ENCODE measurements at regions of chr11 and their contacts with region 1.

Region 1: GRCh38 chr11:102287964-102288724 is 29.1 kb upstream of the BIRC3 start:
- DNase-seq: peak; percentile 43
- ATAC-seq: peak; percentile 91
- H3K4me3 Mint-ChIP-seq: peak overlapping the region; percentile 53
- H3K27ac Mint-ChIP-seq: peak overlapping the region; percentile 25
- H3K4me1 Mint-ChIP-seq: peaks cover 19% of the 10 kb centered on the region
- H3K27me3 Mint-ChIP-seq: no peaks in the 10 kb centered on the region
- CTCF ChIP-seq: peak; percentile 72

Region 2: GRCh38 chr11:102036757-102037156 is 251.4 kb before region 1 on chr11:
- CTCF ChIA-PET with region 1: no interaction called
- POLR2A ChIA-PET with region 1: no interaction called
- intact Hi-C with region 1: no loop called
- DNase-seq: no peak
- ATAC-seq: no peak
- H3K4me3 Mint-ChIP-seq: no peak overlapping the region
- H3K27ac Mint-ChIP-seq: no peak overlapping the region
- H3K4me1 Mint-ChIP-seq: no peaks in the 10 kb centered on the region
- H3K27me3 Mint-ChIP-seq: peaks cover 8% of the 10 kb centered on the region
- CTCF ChIP-seq: no peak

Region 3: DNA sequence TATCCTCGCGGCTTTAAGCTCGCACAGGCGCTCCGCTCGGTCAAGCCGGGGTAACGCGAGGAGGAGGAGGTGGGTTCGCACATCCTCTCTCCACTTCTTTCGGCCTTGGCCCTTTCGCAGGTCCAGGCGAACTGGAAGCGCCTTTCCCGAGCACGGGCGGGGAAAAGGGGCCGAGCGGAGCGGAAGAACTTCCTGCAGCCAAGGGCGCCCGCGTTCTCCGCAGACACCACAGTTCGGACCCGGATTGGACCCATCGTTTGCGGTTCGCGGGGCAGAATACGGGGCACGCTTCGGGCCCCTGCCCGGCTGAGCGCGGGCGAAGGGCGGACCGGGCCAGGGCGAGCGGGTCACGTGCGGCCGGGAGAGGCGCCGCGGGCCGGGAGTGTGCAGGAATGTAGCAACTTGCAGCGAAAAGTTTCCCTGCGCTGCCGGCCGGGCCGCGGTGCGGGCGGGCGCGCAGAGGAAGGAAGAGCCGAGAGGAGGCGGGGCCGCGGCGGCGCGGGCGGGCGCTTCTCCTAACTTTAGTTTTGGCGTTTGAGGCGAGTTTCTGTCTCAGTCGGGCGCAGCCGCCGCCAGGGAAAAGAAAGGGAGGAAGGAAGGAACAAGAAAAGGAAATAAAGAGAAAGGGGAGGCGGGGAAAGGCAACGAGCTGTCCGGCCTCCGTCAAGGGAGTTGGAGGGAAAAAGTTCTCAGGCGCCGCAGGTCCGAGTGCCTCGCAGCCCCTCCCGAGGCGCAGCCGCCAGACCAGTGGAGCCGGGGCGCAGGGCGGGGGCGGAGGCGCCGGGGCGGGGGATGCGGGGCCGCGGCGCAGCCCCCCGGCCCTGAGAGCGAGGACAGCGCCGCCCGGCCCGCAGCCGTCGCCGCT is 178.0 kb before region 1 on chr11 and contains the start of gene YAP1:
- CTCF ChIA-PET with region 1: no interaction called
- POLR2A ChIA-PET with region 1: no interaction called
- intact Hi-C with region 1: no loop called
- DNase-seq: peak; percentile 65
- ATAC-seq: peak; percentile 74
- H3K4me3 Mint-ChIP-seq: peak within 1 kb of the TSS; percentile 84
- H3K27ac Mint-ChIP-seq: no peak within 1 kb of the TSS
- H3K4me1 Mint-ChIP-seq: peaks cover 11% of the 10 kb centered on the region
- H3K27me3 Mint-ChIP-seq: peaks cover 48% of the 10 kb centered on the region
- CTCF ChIP-seq: no peak
- total RNA-seq, gene YAP1: not detected

Region 4: DNA sequence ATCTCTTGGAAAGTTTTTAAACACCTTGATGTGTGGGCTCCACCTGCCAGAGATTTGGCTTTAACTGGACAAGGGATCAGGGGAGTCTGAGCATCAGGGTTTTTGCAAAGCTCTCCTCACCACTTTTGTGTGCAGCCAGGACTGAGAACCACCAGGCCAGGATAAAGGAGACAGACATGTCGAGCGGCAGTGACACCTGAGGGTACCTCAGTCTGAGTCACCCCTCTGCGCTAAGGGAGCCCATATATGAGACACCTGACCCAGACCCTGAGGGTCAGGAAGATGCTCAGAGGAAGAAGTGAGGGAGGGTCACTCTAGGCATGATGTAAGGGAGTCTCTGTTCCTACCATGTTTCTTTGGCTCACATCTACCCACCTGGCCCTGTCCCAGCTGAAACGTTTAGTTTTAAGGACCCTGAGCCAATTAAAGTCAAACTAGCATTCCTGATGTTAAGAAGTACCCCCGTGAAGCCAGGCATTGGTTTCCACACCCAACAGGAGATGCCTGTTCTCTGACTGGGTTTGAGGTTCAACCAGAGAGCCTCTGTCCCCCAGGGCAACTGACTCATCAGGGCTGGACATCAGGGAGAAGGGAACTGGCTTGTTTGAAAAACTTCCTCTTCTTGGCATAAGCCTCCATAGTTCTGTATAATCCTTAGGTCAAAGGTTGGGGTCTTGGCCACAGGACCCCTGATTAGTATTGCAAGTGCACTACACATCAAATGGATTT is 43.3 kb before region 1 on chr11:
- CTCF ChIA-PET with region 1: no interaction called
- POLR2A ChIA-PET with region 1: no interaction called
- intact Hi-C with region 1: no loop called
- DNase-seq: no peak
- ATAC-seq: no peak
- H3K4me3 Mint-ChIP-seq: no peak overlapping the region
- H3K27ac Mint-ChIP-seq: no peak overlapping the region
- H3K4me1 Mint-ChIP-seq: no peaks in the 10 kb centered on the region
- H3K27me3 Mint-ChIP-seq: no peaks in the 10 kb centered on the region
- CTCF ChIP-seq: no peak

Region 5: GRCh38 chr11:102306048-102306585 is 18.0 kb after region 1 on chr11:
- CTCF ChIA-PET with region 1: interaction called, 403 read pairs
- POLR2A ChIA-PET with region 1: interaction called, 5 read pairs
- intact Hi-C with region 1: no loop called
- DNase-seq: peak; percentile 38
- ATAC-seq: peak; percentile 40
- H3K4me3 Mint-ChIP-seq: peak overlapping the region; percentile 51
- H3K27ac Mint-ChIP-seq: peak overlapping the region; percentile 81
- H3K4me1 Mint-ChIP-seq: peaks cover 55% of the 10 kb centered on the region
- H3K27me3 Mint-ChIP-seq: no peaks in the 10 kb centered on the region
- CTCF ChIP-seq: peak; percentile 22

Region 6: DNA sequence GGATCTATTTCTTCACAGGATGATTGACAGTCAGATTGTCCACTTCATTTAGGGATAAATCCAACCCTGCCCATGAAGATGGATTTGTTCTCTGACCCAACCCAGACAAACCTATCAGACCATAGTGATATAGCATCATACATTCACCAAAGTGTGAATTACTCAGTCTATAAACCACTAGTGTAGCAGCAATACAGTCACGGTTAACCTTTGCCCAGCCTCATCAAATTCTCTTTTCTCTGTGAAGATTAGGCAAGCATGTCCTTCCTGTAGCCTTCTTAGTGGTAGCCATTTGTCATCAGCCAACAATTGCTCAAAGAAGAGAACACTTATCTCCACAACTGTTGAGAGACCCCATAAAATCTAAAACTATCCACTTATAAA is 44.5 kb after region 1 on chr11:
- CTCF ChIA-PET with region 1: interaction called, 18 read pairs
- POLR2A ChIA-PET with region 1: no interaction called
- intact Hi-C with region 1: loop called (anchors 5 kb)
- DNase-seq: no peak
- ATAC-seq: peak; percentile 70
- H3K4me3 Mint-ChIP-seq: no peak overlapping the region
- H3K27ac Mint-ChIP-seq: peak overlapping the region; percentile 51
- H3K4me1 Mint-ChIP-seq: peaks cover 13% of the 10 kb centered on the region
- H3K27me3 Mint-ChIP-seq: no peaks in the 10 kb centered on the region
- CTCF ChIP-seq: no peak

Region 7: DNA sequence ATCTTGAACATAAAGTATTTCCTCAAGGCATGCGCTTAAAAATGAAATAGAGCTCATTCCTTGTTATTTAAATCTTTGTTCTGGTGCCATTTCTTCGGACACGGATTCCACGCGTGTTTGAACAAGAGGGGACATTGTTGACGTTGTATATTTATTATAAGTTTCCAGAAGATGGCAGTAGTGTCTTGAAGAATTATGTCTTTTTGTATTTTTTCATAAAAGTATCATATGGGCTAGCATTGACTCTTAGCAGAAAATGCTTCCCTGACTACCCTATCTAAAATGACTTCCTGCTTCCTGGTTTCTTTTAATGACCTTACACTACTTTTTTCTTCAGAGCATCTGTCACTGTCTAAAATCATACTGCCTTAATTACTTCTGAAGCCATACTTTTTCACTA is 79.2 kb after region 1 on chr11:
- CTCF ChIA-PET with region 1: interaction called, 15 read pairs
- POLR2A ChIA-PET with region 1: interaction called, 3 read pairs
- intact Hi-C with region 1: no loop called
- DNase-seq: no peak
- ATAC-seq: peak; percentile 64
- H3K4me3 Mint-ChIP-seq: no peak overlapping the region
- H3K27ac Mint-ChIP-seq: peak overlapping the region; percentile 34
- H3K4me1 Mint-ChIP-seq: peaks cover 30% of the 10 kb centered on the region
- H3K27me3 Mint-ChIP-seq: no peaks in the 10 kb centered on the region
- CTCF ChIP-seq: peak; percentile 56

Region 8: GRCh38 chr11:102666331-102666957 is 378.3 kb after region 1 on chr11:
- CTCF ChIA-PET with region 1: interaction called, 30 read pairs
- POLR2A ChIA-PET with region 1: no interaction called
- intact Hi-C with region 1: no loop called
- DNase-seq: peak; percentile 23
- ATAC-seq: no peak
- H3K4me3 Mint-ChIP-seq: no peak overlapping the region
- H3K27ac Mint-ChIP-seq: no peak overlapping the region
- H3K4me1 Mint-ChIP-seq: no peaks in the 10 kb centered on the region
- H3K27me3 Mint-ChIP-seq: peaks cover 2% of the 10 kb centered on the region
- CTCF ChIP-seq: peak; percentile 78

Measured in activated CD8-positive, alpha-beta T cell treated with anti-CD3 and anti-CD28 coated beads for 36 hours (primary cell).